ENCODE measurements at regions of chr7 and their contacts with region 1.

Region 1: DNA sequence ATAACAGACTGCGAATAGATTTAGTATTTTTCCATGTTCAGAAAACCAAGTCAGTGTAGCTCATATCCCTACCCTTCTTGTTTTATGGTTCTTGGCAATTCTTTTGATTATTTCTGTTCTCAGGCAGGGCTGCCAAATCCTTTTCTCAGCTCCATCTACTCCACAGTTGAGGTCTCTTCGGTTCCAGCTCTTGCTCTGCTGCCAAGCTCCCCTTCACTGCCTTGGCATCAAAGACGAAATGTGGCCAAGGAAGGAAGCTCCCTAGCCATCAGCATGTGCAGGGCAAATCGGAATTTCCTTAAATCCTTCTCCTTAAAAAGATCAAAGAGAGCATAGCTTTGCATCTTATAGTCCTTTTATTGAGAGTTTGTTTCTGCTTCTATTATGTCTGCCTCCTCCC is 116.4 kb upstream of the NOBOX start:
- DNase-seq: peak in 9 of 10 donors; percentile 14 to 66 (median 50)
- H3K4me3 ChIP-seq: no peak overlapping the region
- H3K27ac ChIP-seq: peak overlapping the region in 30 of 59 donors; percentile 1 to 72 (median 42)
- H3K27me3 ChIP-seq: no peaks in the 10 kb centered on the region
- CTCF ChIP-seq: no peak

Region 2: DNA sequence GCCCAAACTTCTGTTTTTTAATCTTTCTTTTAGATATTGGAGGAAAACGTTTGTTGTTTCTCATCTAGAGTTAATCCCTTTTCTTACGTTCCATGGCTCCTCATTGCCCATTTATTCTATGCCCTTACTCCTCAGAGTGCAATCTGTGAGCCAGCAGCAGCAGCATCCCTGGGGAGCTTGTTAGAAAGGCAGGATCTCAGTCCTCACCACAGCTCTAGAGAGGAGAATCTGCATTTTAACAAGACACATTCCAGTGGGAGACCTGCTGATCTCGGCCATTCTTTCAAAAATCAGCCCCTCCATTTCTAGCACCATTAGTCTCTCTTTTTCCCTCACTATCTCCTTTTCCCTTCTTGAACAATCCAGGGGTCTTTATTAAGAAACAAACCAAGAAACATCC is 32.0 kb before region 1 on chr7:
- intact Hi-C with region 1: no loop called
- DNase-seq: no peak
- H3K4me3 ChIP-seq: no peak overlapping the region
- H3K27ac ChIP-seq: no peak overlapping the region
- H3K27me3 ChIP-seq: no peaks in the 10 kb centered on the region
- CTCF ChIP-seq: no peak

Region 3: GRCh38 chr7:144835652-144836544 is 316.0 kb after region 1 on chr7 and contains the start of gene TPK1:
- intact Hi-C with region 1: loop called in 1 of 2 experiments (anchors 5 kb)
- DNase-seq: peak; percentile 73 to 94 (median 88)
- H3K4me3 ChIP-seq: peak within 1 kb of the TSS; percentile 54 to 87 (median 79)
- H3K27ac ChIP-seq: peak within 1 kb of the TSS; percentile 61 to 98 (median 93)
- H3K27me3 ChIP-seq: no peaks in the 10 kb centered on the region
- CTCF ChIP-seq: peak in 31 of 56 donors; percentile 3 to 48 (median 27)
- total RNA-seq, gene TPK1: 10.0 to 33.7 (median 19.2) TPM

Measured in dorsolateral prefrontal cortex (tissue), 120 donors.